ENCODE measurements at regions of chr2 and their contacts with region 1.

Region 1: DNA sequence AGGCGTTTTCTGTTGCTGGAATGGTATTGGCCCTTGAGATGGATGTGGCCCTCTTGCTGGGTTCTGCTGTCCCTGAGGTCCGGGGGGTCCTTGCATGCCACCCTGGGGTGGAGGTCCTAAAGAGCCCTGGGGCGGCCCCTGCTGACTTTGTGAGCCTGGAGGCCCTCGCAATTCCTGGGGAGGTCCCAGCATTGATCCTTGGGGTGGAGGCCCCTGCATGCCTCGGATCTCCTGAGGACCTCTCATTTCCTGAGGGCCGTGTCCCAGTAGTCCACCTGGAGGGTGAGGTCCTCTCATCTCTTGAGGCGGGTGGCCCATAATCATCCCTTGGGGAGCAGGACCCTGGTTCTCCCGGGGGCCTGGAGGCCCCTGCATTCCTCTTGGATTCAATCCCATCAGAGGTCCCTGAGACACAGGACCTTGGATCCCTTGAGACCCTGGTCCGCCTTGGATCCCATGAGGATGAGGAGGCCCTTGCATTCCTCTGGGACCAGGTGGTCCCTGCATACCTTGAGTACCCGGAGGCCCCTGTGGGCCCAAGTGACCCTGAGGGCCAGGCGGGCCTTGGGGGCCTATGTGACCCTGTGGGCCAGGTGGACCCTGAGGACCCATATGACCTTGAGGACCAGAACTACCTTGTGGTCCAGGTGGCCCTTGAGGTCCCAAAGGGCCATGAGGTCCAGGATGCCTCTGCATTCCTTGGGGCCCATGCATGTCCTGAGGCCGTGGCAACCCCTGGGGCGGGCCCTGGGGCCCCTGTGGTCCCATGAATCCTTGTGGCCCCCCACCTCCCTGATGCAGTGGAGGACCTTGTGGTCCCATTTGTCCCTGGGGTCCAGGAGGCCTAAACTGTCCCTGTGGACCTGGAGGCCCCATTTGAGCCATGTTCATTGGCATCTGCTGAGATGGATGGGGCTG is 18.3 kb downstream of the SFT2D3 start:
- DNase-seq: no peak
- ATAC-seq: peak; percentile 34
- H3K4me3 ChIP-seq: no peak overlapping the region
- H3K27ac ChIP-seq: no peak overlapping the region
- H3K4me1 ChIP-seq: peaks cover 12% of the 10 kb centered on the region
- H3K27me3 ChIP-seq: no peaks in the 10 kb centered on the region
- CTCF ChIP-seq: no peak
- EP300 ChIP-seq: no peak
- POLR2A ChIP-seq: 0 out of 4 replicates have a peak, but pooled peaks of 1 of the 2 experiments have one; percentile 7
- RAD21 ChIP-seq: no peak

Region 2: GRCh38 chr2:127763776-127764175 is 44.2 kb after region 1 on chr2:
- CTCF ChIA-PET with region 1: no interaction called
- POLR2A ChIA-PET with region 1: no interaction called
- in situ Hi-C with region 1: no loop called
- intact Hi-C with region 1: loop called (anchors 5 kb)
- DNase-seq: peak; percentile 55
- ATAC-seq: peak; percentile 87
- H3K4me3 ChIP-seq: no peak overlapping the region
- H3K27ac ChIP-seq: no peak overlapping the region
- H3K4me1 ChIP-seq: peaks cover 24% of the 10 kb centered on the region
- H3K27me3 ChIP-seq: no peaks in the 10 kb centered on the region
- CTCF ChIP-seq: no peak
- EP300 ChIP-seq: no peak
- POLR2A ChIP-seq: no peak
- RAD21 ChIP-seq: no peak

Region 3: GRCh38 chr2:128202791-128203190 is 483.2 kb after region 1 on chr2:
- CTCF ChIA-PET with region 1: no interaction called
- POLR2A ChIA-PET with region 1: no interaction called
- in situ Hi-C with region 1: no loop called
- intact Hi-C with region 1: no loop called
- DNase-seq: no peak
- ATAC-seq: no peak; the same call in 2 of the 3 replicates
- H3K4me3 ChIP-seq: no peak overlapping the region
- H3K27ac ChIP-seq: no peak overlapping the region
- H3K4me1 ChIP-seq: no peaks in the 10 kb centered on the region
- H3K27me3 ChIP-seq: no peaks in the 10 kb centered on the region
- CTCF ChIP-seq: no peak
- EP300 ChIP-seq: no peak
- POLR2A ChIP-seq: no peak
- RAD21 ChIP-seq: no peak